ENCODE measurements at regions of chr16 and their contacts with region 1.

Region 1: GRCh38 chr16:87316923-87317749 is at the start of gene C16orf95:
- DNase-seq: peak; percentile 96
- H3K4me3 ChIP-seq: peak within 1 kb of the TSS; percentile 90
- H3K27ac ChIP-seq: peak within 1 kb of the TSS; percentile 89
- H3K4me1 ChIP-seq: peaks cover 18% of the 10 kb centered on the region
- CTCF ChIP-seq: peak; percentile 78
- total RNA-seq, gene C16orf95: 4.2 and 8.5 TPM in 2 replicates

Region 2: GRCh38 chr16:87207509-87207908 is 109.6 kb before region 1 on chr16:
- CTCF ChIA-PET with region 1: no interaction called
- POLR2A ChIA-PET with region 1: no interaction called
- intact Hi-C with region 1: no loop called
- DNase-seq: no peak
- H3K4me3 ChIP-seq: no peak overlapping the region
- H3K27ac ChIP-seq: no peak overlapping the region
- H3K4me1 ChIP-seq: no peaks in the 10 kb centered on the region
- CTCF ChIP-seq: no peak

Region 3: GRCh38 chr16:87393680-87394055 is 76.5 kb after region 1 on chr16:
- CTCF ChIA-PET with region 1: no interaction called
- POLR2A ChIA-PET with region 1: no interaction called
- intact Hi-C with region 1: loop called (anchors 2 kb)
- DNase-seq: no peak
- H3K4me3 ChIP-seq: peak overlapping the region; percentile 78
- H3K27ac ChIP-seq: peak overlapping the region; percentile 14
- H3K4me1 ChIP-seq: peaks cover 31% of the 10 kb centered on the region
- CTCF ChIP-seq: no peak